ENCODE measurements at regions of chr1 and their contacts with region 1.

Region 1: DNA sequence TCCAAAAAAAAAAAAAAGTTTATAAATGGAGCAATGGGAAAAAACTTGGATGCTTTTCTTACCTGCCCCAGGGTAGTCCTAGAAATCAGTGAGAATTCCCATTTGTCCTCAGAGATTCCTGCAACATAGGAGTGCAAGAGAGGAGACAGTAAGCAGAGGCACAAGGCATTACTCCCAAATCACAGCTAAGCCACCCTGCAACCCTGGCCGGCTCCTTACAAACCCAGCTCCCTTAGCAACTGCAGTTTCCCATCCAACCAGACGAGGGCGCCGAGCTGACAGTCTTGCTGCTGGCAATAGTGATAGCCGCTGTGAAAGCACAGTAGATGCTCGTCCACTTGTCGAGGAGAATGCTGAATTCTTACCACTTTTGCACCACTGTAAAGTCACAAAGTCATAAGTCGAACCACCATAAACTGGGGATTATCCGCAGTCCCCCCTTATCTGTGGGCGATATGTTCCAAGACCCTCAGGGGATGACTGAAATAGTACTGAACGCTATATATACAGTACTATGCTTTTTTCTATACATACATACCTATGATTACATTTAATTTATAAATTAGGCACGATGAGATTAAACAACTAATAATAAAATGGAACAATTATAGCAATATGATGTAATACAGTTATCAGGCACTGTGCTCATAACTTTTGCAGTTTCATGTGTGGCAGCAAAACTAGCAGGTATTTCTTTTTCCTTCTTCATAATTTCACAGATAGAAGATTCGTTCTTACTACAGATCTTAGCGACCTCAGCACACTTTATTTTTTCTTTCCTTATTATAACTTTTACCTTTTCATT is 6.0 kb upstream of the PITHD1 start:
- DNase-seq: no peak
- H3K4me3 ChIP-seq: no peak overlapping the region
- H3K27me3 ChIP-seq: no peaks in the 10 kb centered on the region
- CTCF ChIP-seq: peak; percentile 98

Region 2: GRCh38 chr1:23756676-23757075 is 15.6 kb before region 1 on chr1:
- CTCF ChIA-PET with region 1: interaction called, 13 read pairs
- POLR2A ChIA-PET with region 1: no interaction called
- DNase-seq: no peak
- H3K4me3 ChIP-seq: no peak overlapping the region
- H3K27me3 ChIP-seq: no peaks in the 10 kb centered on the region
- CTCF ChIP-seq: no peak

Region 3: GRCh38 chr1:23800400-23801337 is 28.4 kb after region 1 on chr1 and contains the start of gene GALE:
- CTCF ChIA-PET with region 1: interaction called, 10 read pairs
- POLR2A ChIA-PET with region 1: no interaction called
- DNase-seq: peak; percentile 60
- H3K4me3 ChIP-seq: peak within 1 kb of the TSS; percentile 75
- H3K27me3 ChIP-seq: no peaks in the 10 kb centered on the region
- CTCF ChIP-seq: no peak
- polyA plus RNA-seq, gene GALE: 23.8 and 36.1 TPM in 2 replicates

Region 4: DNA sequence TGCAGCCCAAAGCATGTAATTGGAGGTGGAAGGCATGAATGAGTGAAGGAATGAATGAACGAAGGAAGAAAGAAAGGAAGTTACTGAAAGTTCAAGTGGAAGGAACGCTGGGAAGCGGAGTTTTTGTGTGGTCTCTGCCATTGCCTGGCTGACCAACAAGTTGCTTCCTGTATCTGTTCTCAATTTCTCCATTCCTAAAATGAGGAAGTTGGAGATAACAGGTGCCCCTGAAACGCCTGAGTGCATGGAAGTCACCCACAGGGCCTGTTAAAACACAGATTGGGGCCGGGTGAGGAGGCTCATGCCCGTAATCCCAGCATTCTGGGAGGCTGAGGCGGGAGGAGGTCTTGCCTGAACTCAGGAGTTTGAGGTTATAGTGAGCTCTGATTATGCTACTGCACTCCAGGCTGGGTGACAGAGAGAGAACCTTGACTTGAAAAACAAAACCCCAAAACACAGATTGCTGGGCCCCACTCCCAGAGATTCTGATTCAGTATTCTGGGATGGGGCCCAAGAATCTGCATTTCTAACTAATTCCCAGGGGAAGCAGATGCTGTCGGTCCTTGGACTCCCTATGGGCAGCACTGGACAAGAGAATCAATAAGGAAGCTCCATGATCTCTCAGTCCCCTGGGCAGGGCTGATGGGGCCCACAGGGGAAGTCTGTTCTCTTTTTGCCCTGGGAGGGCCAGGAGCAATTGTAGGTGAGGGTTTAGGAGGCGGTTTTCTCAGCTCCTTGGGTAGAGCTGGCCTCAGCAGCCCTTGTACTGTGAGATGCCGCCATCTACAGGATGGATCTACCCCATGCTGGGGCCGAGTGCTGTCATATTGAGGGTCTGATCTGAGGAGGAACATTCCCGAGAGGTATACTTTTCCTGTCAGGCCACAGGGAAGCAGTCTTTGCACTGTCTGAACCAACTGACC is 144.2 kb after region 1 on chr1:
- CTCF ChIA-PET with region 1: interaction called, 24 read pairs
- POLR2A ChIA-PET with region 1: no interaction called
- DNase-seq: no peak
- H3K4me3 ChIP-seq: no peak overlapping the region
- H3K27me3 ChIP-seq: 0 out of 2 replicates have a peak, but pooled peaks cover 1% of the 10 kb centered on the region
- CTCF ChIP-seq: peak; percentile 72

Measured in BJ (cell line).